ENCODE measurements at regions of chr19 and their contacts with region 1.

Region 1: DNA sequence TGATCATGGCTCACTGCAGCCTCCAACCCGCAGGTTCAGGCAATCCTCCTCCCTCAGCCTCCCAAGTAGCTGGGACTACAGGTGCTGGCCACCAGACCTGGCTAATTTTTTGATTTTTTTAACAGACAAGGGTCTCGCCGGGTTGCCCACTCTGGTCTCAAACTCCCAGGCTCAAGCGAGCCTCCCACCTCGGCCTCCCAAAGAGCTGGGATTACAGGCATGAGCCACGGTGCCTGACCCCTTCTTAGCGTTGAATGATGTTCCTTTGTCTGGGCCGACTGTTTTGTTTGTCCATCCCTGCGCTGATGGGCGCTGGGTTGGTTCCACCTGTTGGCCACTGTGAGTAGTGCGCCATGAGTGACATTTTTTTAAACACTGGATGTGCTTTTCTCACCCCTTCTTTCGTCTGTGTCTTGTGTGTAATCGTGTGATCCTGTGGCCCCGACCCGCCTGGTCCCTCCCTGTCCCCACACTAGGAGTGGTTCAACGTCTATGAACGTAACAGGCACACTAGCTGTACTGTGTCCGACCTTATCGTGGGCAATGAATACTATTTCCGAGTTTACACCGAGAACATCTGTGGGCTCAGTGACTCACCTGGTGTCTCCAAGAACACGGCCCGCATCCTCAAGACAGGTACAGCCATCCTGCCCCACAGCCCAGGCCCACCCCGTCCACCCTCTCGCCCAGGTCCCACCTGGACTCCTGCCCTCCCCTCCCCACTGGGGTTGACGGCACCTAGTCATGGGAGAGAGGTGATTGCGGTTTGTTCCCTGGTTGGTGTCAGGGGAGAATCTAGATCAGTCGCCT is 15.0 kb upstream of the EMC10 start:
- DNase-seq: peak in 1 of 2 donors; percentile 59
- ATAC-seq: peak; percentile 55 to 67
- H3K4me3 ChIP-seq: no peak overlapping the region
- H3K27ac ChIP-seq: peak overlapping the region in 1 of 4 donors; percentile 46
- H3K4me1 ChIP-seq: peaks cover 0 to 8% of the 10 kb centered on the region in 2 donors
- H3K27me3 ChIP-seq: peaks cover 7 to 9% (median 9%) of the 10 kb centered on the region in 3 donors
- CTCF ChIP-seq: peak; percentile 67 to 82 (median 76)
- POLR2A ChIP-seq: no peak

Region 2: DNA sequence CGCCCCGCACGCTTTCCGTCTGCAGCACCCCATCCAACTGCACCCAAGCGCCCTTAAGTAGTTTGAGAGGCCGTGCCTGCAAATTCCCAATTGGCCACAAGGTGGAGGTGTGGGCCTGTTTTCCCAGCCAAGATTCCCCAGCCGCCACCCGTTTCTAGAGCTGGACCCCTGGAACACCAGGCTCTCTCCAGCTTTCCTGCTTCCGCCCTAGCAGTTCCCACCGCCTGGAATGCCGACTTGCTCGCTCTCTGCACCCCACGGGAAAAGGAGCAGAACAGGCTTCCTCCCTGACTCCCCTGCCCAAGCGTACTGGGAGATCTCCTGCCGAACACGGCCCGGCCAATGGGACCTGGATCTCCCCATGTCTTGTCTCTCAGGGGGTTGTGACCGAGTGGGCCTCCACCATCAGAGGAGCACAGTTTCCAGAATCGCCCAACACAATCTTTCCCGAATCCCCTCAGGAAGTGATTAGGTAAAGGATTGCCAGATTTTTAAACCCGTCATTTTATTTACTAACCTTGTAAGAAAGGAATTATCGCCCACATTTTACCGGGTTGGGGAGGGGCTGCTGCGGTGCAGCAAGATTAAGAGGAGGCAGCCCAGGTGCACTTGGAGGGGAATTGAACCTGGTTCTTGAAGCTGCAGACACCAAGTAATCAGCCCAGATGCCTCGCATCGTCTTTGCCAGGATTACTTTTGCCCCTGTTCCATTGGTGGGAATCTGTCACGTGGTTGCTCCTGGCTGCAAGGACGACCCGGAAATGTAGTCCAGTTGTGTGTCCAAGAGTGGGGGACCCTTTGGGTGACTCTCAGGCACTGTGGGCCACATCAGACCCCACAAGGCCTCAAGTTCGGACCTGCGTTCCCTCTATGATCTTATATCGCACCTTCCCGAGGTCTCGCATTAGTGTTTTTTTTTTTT is 92.4 kb before region 1 on chr19:
- in situ Hi-C with region 1: loop called in 3 of 4 experiments (anchors 5 to 25 kb)
- intact Hi-C with region 1: loop called (anchors 1 kb)
- DNase-seq: peak; percentile 70 to 83
- ATAC-seq: peak; percentile 94 to 97
- H3K4me3 ChIP-seq: peak overlapping the region; percentile 64 to 74 (median 68)
- H3K27ac ChIP-seq: peak overlapping the region; percentile 49 to 75 (median 64)
- H3K4me1 ChIP-seq: peaks cover 3 to 7% of the 10 kb centered on the region in 2 donors
- H3K27me3 ChIP-seq: no peaks in the 10 kb centered on the region
- CTCF ChIP-seq: peak; percentile 71 to 93 (median 89)
- POLR2A ChIP-seq: no peak

Region 3: DNA sequence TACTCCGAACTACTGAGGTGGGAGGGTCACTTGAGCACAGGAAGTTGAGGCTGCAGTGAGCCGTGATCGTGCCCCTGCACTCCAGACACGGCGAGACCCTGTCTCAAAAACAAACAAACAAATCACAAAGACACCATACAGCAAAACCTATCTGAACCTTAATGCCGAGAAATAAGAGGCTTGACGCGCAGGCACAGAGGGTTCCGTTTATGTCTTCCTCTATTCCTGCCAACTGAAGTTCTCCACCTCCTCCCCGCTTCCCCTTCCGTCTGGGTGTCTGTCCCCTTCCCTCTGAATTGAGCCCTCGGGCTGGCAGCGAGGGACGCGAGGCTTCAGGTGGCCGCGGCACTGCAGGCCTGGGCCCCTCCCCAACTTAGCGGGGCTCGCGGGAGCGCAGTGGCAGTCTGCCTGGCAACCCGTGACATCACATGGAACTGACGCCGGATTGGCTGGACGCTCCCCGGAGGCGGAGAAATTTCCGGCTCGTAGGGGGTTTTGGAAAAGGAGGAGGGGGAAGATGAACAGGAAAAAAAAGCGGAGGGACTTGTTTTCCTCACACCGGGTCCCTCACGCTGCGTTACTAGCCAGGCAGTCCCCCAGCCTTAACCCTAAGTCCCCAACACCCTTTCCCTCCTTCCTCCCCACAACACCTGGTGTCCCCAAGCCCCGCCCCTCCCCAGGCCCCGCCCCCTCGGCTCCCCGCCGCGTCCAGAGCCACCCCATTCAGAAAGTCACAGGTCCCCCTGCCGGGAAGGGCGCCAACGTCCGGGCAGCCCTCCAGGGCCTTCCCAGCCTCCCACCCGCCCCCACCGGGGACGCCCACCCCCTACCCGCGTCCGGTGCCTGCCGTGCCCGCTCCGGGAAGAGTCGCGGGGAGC is 29.7 kb before region 1 on chr19:
- in situ Hi-C with region 1: no loop called
- intact Hi-C with region 1: loop called (anchors 2 kb)
- DNase-seq: peak; percentile 73 to 81
- ATAC-seq: peak; percentile 77 to 88
- H3K4me3 ChIP-seq: peak overlapping the region; percentile 66 to 94 (median 78)
- H3K27ac ChIP-seq: peak overlapping the region; percentile 85 to 94 (median 88)
- H3K4me1 ChIP-seq: peaks cover 12 to 22% of the 10 kb centered on the region in 2 donors
- H3K27me3 ChIP-seq: peaks cover 4 to 14% (median 10%) of the 10 kb centered on the region in 3 donors
- CTCF ChIP-seq: no peak
- POLR2A ChIP-seq: peak; percentile 25 to 33

Region 4: GRCh38 chr19:50500060-50500752 is 38.9 kb after region 1 on chr19:
- in situ Hi-C with region 1: no loop called
- intact Hi-C with region 1: no loop called
- DNase-seq: peak; percentile 84 to 94
- ATAC-seq: peak; percentile 67 to 76
- H3K4me3 ChIP-seq: peak overlapping the region; percentile 59 to 71 (median 63)
- H3K27ac ChIP-seq: peak overlapping the region; percentile 97 to 100 (median 97)
- H3K4me1 ChIP-seq: peaks cover 14 to 16% of the 10 kb centered on the region in 2 donors
- H3K27me3 ChIP-seq: no peaks in the 10 kb centered on the region
- CTCF ChIP-seq: peak in 3 of 5 experiments; percentile 21 to 71 (median 69)
- POLR2A ChIP-seq: peak; percentile 93

Region 5: DNA sequence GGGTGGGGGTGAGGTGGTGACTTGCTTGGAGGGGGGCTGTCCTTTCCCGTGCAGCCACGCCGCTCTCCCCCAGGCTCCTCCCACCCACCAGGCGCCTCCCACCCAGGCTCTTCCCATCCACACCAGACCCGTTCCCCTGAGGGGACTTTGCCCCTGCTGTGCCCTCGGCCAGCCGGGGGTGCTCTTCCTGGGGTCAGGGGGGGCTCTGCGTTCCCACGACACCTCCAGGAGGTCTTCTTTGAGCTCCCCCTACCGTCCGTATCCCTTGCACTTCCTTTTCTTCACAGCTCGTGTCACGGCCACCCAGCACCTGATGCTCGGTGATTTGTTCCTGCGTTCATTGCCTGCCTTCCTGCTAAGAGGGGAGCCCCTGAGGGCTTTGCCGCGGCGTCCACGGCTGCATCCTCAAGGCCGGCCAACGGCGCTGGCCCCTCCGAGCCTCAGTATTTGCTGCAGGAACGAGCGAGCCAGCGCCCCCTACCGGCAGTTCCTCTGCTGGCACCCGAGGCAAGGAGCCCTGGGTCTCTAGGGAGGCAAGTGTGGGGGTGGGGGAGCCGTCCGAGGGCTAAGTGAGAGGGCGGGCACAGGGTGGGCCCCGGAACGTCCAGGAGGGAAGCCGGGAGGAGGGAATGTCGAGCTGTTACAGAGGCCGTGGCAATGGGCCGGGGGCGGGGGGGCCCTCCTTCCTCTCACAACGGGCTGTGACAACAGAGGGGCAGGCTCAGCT is 95.2 kb after region 1 on chr19:
- in situ Hi-C with region 1: no loop called
- intact Hi-C with region 1: loop called (anchors 10 kb)
- DNase-seq: peak in 1 of 2 donors; percentile 51
- ATAC-seq: peak in 1 of 2 donors; percentile 62
- H3K4me3 ChIP-seq: peak overlapping the region; percentile 36 to 49 (median 42)
- H3K27ac ChIP-seq: no peak overlapping the region
- H3K4me1 ChIP-seq: peaks cover 0 to 11% of the 10 kb centered on the region in 2 donors
- H3K27me3 ChIP-seq: peaks cover 42 to 74% (median 54%) of the 10 kb centered on the region in 3 donors
- CTCF ChIP-seq: peak; percentile 34 to 79 (median 69)
- POLR2A ChIP-seq: no peak